ENCODE measurements at regions of chr5 and their contacts with region 1.

Region 1: GRCh38 chr5:57221049-57221568 is 47.2 kb downstream of the GPBP1 start:
- DNase-seq: no peak
- H3K4me3 Mint-ChIP-seq: no peak overlapping the region
- H3K27ac Mint-ChIP-seq: peak overlapping the region; percentile 56
- H3K4me1 Mint-ChIP-seq: peaks cover 51% of the 10 kb centered on the region
- H3K27me3 Mint-ChIP-seq: no peaks in the 10 kb centered on the region

Region 2: DNA sequence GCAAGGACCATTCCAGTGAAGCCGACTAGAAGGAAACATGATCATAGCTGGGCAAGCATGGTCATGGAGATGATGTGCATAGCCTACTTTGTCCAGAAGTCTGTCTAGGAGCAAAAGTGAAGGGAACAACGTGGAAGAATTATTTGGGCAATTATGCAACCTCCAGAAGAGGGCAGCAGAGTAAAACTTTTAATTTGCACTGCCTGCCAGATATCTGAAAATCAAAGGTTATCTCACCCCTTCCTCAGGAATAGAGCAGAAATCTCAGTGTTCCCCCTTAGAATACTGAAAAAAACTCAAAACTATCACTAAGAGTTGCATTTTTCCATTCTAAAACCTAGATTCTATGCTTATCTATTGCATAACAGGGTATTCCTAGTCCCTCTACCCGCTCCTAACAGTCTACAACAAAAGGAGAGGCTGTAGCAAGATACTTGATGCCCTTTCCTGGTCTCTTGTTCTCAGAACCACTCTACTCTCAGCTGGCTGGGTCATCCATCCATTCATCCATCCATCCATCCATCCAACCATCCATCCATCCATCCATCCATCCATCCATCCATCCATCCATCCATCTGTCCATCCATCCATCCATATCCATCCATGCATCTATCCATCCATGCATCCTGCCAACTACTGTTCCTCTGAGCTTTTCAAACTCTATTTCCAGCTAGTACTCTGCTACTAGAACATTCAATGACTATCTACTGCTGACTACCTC is 320.1 kb before region 1 on chr5:
- CTCF ChIA-PET with region 1: interaction called, 13 read pairs
- POLR2A ChIA-PET with region 1: no interaction called
- intact Hi-C with region 1: loop called (anchors 2 kb)
- DNase-seq: peak; percentile 24
- H3K4me3 Mint-ChIP-seq: no peak overlapping the region
- H3K27ac Mint-ChIP-seq: no peak overlapping the region
- H3K4me1 Mint-ChIP-seq: peaks cover 5% of the 10 kb centered on the region
- H3K27me3 Mint-ChIP-seq: no peaks in the 10 kb centered on the region

Region 3: DNA sequence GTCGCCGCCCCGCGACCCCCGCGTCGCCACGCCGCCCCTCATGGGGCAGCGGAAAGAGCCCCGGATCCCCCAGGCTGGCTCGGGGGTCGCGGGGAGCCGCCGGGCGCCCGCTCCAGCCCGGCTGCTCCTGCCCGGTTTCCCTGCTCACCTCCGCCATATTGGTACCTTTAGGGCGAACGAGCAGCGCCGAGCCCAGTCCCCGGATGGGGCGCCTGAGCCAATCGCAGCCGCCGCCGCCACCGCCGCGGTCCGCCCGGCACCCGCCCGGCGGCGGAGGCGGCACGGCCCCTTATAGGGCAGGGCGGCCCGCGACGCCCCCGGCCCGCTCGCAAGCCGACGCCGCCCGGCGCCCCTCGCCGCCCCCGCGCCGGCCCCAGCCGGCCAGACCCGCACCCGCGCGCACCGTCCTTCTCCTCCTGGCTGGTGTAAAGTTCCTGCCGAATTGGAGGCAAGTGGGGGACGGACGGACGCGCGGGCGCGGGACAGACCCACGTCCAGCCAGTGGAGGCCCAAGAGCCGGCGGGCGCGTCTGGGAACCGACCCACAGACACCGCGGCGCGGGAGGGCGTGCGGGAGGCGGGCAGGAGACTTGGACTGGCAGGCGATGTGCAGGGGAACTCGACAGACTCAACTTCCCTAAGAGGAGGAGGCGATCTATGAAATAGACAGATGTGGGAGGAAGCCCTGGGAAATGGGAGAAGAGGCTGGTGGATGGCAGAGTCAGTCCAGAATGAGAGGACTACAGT is 269.0 kb before region 1 on chr5 and contains the start of gene MIER3:
- CTCF ChIA-PET with region 1: interaction called, 9 read pairs
- POLR2A ChIA-PET with region 1: no interaction called
- intact Hi-C with region 1: loop called (anchors 1 kb)
- DNase-seq: peak; percentile 86
- H3K4me3 Mint-ChIP-seq: peak within 1 kb of the TSS; percentile 96
- H3K27ac Mint-ChIP-seq: peak within 1 kb of the TSS; percentile 69
- H3K4me1 Mint-ChIP-seq: peaks cover 15% of the 10 kb centered on the region
- H3K27me3 Mint-ChIP-seq: peaks cover 11% of the 10 kb centered on the region
- total RNA-seq, gene MIER3: 16.5 to 17.2 TPM

Region 4: DNA sequence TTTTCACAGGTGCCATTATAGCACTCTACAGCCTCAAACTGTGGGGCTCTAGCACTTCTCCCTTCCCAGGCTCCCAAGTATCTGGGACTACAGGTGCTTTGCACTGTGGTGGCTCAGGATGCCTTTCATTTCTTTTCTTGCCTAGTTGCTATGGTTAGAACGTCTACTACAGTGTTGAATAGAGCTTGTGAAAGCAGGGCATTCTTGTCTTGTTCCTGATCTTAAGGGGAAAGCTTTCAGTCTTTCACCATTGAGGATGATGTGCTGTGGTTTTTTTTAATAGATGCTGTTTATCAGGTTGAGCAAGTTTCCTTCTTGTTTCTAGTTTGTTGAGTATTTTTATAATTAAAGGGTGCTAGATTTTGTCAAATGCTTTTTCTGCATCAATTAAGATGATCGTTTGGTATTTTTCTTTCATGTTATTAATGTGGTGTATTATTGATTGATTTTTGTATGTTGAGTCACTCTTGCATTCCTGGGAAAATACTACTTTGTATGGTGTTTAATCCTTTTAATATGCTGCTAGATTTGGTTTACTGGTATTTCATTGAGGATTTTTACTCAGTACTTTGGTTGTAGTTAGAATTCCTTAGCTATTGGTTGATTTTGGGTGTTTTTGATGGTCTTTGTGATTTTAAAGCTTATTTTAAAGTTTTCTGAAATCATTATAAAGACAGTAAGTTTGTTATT is 11.6 kb before region 1 on chr5:
- CTCF ChIA-PET with region 1: no interaction called
- POLR2A ChIA-PET with region 1: no interaction called
- intact Hi-C with region 1: no loop called
- DNase-seq: no peak
- H3K4me3 Mint-ChIP-seq: no peak overlapping the region
- H3K27ac Mint-ChIP-seq: peak overlapping the region; percentile 38
- H3K4me1 Mint-ChIP-seq: peaks cover 64% of the 10 kb centered on the region
- H3K27me3 Mint-ChIP-seq: no peaks in the 10 kb centered on the region

Region 5: DNA sequence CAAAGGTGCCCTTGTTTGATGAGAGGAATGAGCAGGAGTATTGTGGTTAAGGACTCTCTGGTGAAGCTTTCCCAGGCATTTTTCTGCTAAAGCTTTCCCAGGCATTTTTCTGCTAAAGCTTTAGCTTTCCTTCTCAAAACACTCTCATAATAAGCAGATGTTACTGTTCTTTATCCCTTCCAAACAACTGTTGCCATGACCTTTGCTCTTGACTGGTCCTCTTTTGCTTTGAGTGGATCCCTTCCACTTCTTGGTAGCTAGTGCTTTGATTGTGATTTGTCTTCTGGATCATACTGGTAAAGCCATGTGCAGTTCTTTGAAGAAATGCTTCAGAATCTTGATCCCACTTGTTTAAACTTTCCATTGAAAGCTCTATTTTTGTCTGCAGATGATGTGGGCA is 38.6 kb after region 1 on chr5:
- CTCF ChIA-PET with region 1: interaction called, 3 read pairs
- POLR2A ChIA-PET with region 1: no interaction called
- intact Hi-C with region 1: loop called (anchors 5 kb)
- DNase-seq: no peak
- H3K4me3 Mint-ChIP-seq: no peak overlapping the region
- H3K27ac Mint-ChIP-seq: no peak overlapping the region
- H3K4me1 Mint-ChIP-seq: peaks cover 44% of the 10 kb centered on the region
- H3K27me3 Mint-ChIP-seq: no peaks in the 10 kb centered on the region